ENCODE measurements at regions of chr13 and their contacts with region 1.

Region 1: GRCh38 chr13:46134961-46135522 is 30.2 kb upstream of the CPB2 start:
- DNase-seq: no peak
- H3K4me3 ChIP-seq: no peak overlapping the region
- H3K27ac ChIP-seq: no peak overlapping the region
- H3K4me1 ChIP-seq: peaks cover 5% of the 10 kb centered on the region
- H3K27me3 ChIP-seq: no peaks in the 10 kb centered on the region
- CTCF ChIP-seq: no peak

Region 2: GRCh38 chr13:45925151-45925550 is 209.9 kb before region 1 on chr13:
- CTCF ChIA-PET with region 1: no interaction called
- POLR2A ChIA-PET with region 1: interaction called, 10 read pairs
- intact Hi-C with region 1: no loop called
- DNase-seq: peak; percentile 22
- H3K4me3 ChIP-seq: no peak overlapping the region
- H3K27ac ChIP-seq: no peak overlapping the region
- H3K4me1 ChIP-seq: peaks cover 7% of the 10 kb centered on the region
- H3K27me3 ChIP-seq: no peaks in the 10 kb centered on the region
- CTCF ChIP-seq: peak; percentile 47

Region 3: DNA sequence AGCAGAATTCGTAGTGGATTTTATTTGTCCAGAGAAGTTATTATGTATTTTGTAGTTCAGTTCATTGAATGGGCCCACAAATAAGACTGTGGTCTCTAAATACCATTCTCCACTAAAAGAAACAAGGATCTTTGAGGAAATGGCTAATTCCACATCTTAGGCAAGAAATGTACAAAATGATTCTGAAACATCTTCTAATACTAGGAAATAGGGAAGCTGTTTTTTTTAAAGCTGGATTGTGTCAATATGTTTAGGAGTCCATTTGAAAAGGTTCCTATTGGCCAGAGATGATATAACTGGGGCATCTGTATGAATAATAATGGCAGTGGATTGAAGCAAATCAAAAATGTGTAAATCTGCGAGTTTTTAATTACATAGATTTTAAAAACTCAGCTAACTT is 195.0 kb before region 1 on chr13:
- CTCF ChIA-PET with region 1: no interaction called
- POLR2A ChIA-PET with region 1: interaction called, 12 read pairs
- intact Hi-C with region 1: no loop called
- DNase-seq: no peak
- H3K4me3 ChIP-seq: no peak overlapping the region
- H3K27ac ChIP-seq: no peak overlapping the region
- H3K4me1 ChIP-seq: peaks cover 16% of the 10 kb centered on the region
- H3K27me3 ChIP-seq: no peaks in the 10 kb centered on the region
- CTCF ChIP-seq: no peak

Region 4: DNA sequence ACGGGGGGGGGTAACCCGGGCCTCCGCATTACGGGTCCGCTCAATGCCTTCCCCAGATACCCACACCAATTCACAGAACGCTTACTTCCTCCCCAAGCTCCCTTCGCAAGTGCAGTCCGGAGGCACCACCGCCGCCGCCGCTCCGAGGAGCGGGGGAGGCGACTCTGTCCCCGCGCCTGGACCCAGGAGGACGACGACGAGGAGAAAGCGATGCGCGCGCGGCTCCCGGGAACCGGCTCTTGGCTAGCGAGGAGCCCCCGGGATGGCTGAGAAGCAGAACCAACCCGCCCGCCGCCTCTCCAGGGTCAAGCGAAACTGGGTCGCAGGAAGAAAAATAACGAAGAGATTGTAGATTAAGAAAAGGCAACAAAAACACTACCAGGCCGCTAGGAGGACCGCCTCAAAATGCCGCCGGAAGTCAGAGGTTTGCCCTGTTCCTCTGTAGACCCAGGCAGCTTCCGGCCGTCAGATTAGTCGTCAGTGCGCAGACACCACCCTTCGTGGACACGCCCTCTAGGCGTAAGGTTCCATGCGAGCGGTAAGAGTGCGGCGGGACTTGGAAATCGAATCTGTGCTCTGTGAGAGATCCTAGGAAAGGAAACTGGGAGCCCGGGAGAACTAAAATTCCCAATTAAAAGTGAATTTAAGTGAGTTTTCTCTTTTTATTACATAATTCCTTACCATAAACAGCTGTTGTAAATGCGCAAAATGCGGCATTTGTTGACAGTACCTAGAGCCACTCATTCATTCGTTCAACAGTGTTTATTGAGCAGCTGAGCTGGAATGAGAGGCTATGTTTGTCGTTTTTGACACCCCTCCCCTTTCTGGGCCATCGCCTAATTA is 82.5 kb before region 1 on chr13 and contains the start of gene ZC3H13:
- CTCF ChIA-PET with region 1: interaction called, 14 read pairs
- POLR2A ChIA-PET with region 1: no interaction called
- intact Hi-C with region 1: no loop called
- DNase-seq: peak; percentile 99
- H3K4me3 ChIP-seq: peak within 1 kb of the TSS; percentile 89
- H3K27ac ChIP-seq: peak within 1 kb of the TSS; percentile 98
- H3K4me1 ChIP-seq: peaks cover 22% of the 10 kb centered on the region
- H3K27me3 ChIP-seq: no peaks in the 10 kb centered on the region
- CTCF ChIP-seq: peak; percentile 42; the same call in 1 of the 2 replicates
- total RNA-seq, gene ZC3H13: 373 and 378 TPM in 2 replicates

Measured in A673 (cell line).